Activated CD4-positive, alpha-beta T cell treated with anti-CD3 and anti-CD28 coated beads, Interleukin-2, amount 10 ng/mL, durations not matched to agents 24 days and 14 days (primary cell): ENCODE measurements at regions of chr17 and their contacts with region 1.

Region 1: DNA sequence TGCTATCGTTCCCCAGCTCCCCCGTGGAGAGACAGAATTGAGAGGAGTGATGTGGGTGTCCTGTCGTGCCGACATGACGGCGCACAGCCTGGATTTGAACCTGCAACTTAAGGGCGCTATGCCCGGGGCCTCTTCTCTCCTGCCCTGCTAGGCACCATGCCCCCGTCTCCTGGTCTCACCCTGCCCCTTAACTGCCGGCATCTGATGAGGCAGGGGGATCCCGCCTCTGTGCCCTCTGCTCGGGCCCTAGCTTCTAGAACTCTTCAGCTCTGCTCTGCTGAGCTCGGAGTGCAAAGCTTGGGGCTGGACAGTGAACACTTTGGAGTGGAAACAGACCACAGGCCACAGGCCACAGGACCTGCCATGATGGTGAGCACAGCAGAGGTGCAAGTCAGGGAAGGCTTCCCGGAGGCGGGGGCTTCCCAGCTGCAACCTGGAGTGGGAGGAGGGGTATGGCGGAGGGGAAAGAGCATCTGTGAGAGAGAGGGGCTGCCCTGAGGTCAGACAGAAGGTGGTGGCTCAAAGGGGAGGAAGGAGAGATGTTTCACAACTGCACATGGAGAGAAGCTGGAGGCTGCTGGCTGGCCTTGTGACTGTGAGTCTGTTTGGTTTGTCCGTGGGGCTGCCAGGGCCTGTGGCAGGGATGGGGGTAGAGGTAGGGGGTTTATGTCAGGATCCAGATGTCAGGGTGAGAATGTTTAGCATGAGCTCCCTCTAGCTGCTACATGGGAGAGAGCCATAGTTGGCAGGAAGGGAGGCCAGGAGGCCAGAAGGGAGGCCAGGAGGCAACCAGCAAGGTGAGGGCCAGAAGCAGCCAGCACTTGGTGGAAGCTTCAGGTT is 107.8 kb downstream of the CRLF3 start:
- DNase-seq: no peak
- H3K4me3 Mint-ChIP-seq: no peak overlapping the region
- H3K27ac Mint-ChIP-seq: no peak overlapping the region
- H3K4me1 Mint-ChIP-seq: peaks cover 11% of the 10 kb centered on the region
- H3K27me3 Mint-ChIP-seq: peaks cover 5% of the 10 kb centered on the region

Region 2: GRCh38 chr17:30600049-30600829 is 116.4 kb before region 1 on chr17:
- intact Hi-C with region 1: loop called (anchors 5 kb)
- DNase-seq: peak; percentile 88
- H3K4me3 Mint-ChIP-seq: peak overlapping the region; percentile 96
- H3K27ac Mint-ChIP-seq: peak overlapping the region; percentile 60
- H3K4me1 Mint-ChIP-seq: peaks cover 15% of the 10 kb centered on the region
- H3K27me3 Mint-ChIP-seq: peaks cover 12% of the 10 kb centered on the region